Activated T-helper 2 cell treated with anti-CD3 and anti-CD28 coated beads, Interferon-gamma antibody, Interleukin-2, Interleukin-4, amounts not matched to agents 10 μg/mL and 5 μg/mL and 100 μg/mL, durations not matched to agents 14 hours and 24 hours and 36 hours (primary cell): ENCODE measurements at regions of chr3 and their contacts with region 1.

Region 1: GRCh38 chr3:184017672-184018423 is at the start of gene ABCC5:
- DNase-seq: peak; percentile 78
- H3K4me3 Mint-ChIP-seq: peak within 1 kb of the TSS; percentile 97
- H3K27ac Mint-ChIP-seq: peak within 1 kb of the TSS; percentile 86
- H3K4me1 Mint-ChIP-seq: peaks cover 23% of the 10 kb centered on the region
- H3K27me3 Mint-ChIP-seq: peaks cover 10% of the 10 kb centered on the region
- total RNA-seq, gene ABCC5: 20.6 and 21.0 TPM in 2 replicates

Region 2: GRCh38 chr3:183895296-183895695 is 122.6 kb before region 1 on chr3:
- intact Hi-C with region 1: loop called (anchors 2 kb)
- DNase-seq: no peak
- H3K4me3 Mint-ChIP-seq: no peak overlapping the region
- H3K27ac Mint-ChIP-seq: no peak overlapping the region
- H3K4me1 Mint-ChIP-seq: peaks cover 3% of the 10 kb centered on the region
- H3K27me3 Mint-ChIP-seq: peaks cover 5% of the 10 kb centered on the region

Region 3: DNA sequence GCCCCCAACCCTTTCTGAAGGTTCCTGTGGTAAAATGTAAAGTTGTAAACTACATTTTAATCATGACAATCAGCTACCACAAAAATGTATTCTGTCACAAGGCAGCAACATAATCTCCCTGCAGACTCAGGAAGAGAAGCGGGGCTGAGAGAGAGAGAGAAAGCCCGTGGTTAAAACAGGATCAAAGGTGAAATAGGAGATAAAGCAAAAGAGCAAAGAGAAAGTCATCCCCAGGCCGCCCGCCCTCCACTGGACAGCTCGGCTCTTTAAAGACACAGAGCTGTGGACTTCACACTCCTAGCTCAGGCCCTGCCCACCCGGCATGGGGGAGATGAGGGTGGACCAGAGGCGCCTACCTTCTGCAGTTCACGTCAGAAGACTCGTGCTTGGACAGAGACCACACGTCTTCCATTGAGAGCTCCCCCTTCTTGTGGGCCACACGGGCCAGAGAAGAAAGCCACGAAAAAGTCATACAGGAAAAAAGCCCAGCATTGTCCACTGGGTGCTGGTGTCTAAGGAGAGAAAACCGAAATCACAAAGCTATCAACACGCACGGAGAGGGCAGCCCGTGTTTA is 29.5 kb before region 1 on chr3:
- intact Hi-C with region 1: no loop called
- DNase-seq: no peak
- H3K4me3 Mint-ChIP-seq: no peak overlapping the region
- H3K27ac Mint-ChIP-seq: no peak overlapping the region
- H3K4me1 Mint-ChIP-seq: peaks cover 15% of the 10 kb centered on the region
- H3K27me3 Mint-ChIP-seq: no peaks in the 10 kb centered on the region